ENCODE measurements at regions of chr7 and their contacts with region 1.

Region 1: GRCh38 chr7:75024922-75025321 is 48.7 kb downstream of the RCC1L start:
- DNase-seq: no peak
- H3K4me3 ChIP-seq: no peak overlapping the region
- H3K27ac ChIP-seq: no peak overlapping the region
- H3K4me1 ChIP-seq: no peaks in the 10 kb centered on the region
- H3K27me3 ChIP-seq: no peaks in the 10 kb centered on the region
- CTCF ChIP-seq: no peak
- POLR2A ChIP-seq: no peak

Region 2: DNA sequence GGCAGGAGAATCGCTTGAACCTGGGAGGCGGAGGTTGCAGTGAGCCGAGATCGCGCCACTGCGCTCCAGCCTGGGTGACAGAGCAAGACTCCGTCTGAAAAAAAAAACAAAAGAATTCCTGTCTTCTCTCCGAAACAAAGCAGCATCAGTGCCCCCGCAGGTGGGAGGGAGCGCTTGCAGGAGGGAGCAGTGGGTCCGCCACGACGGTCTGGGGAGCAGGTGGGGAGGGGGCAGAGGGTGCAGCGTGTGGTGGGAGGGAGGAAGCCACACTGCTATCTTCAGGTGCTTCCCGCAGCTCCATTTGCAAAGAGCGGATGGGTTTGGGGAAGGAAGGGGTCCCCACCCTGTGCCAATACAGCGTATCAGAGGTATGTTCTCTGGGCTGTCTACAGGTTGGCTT is 909.6 kb before region 1 on chr7:
- intact Hi-C with region 1: no loop called
- DNase-seq: no peak
- H3K4me3 ChIP-seq: no peak overlapping the region
- H3K27ac ChIP-seq: no peak overlapping the region
- H3K4me1 ChIP-seq: no peaks in the 10 kb centered on the region
- H3K27me3 ChIP-seq: no peaks in the 10 kb centered on the region
- CTCF ChIP-seq: no peak
- POLR2A ChIP-seq: no peak

Region 3: DNA sequence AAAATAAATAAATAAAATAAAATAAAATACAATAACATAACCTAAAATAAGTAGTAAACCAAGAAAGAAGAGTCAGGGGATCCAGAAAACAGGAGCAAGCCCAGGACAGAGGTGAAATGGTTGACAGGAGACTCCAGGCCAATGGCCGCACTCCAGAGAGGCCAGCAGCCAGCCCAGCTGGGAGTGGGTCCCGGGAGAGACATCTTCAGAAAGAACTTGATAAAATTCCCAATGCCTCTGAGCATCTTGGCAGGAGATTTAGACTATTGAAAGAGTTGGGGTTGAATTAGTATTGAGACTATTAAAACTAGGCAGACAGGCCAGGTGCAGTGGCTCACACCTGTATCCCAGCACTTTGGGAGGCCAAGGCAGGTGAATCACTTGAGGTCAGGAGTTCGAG is 673.1 kb before region 1 on chr7:
- intact Hi-C with region 1: loop called (anchors 5 kb)
- DNase-seq: no peak
- H3K4me3 ChIP-seq: no peak overlapping the region
- H3K27ac ChIP-seq: no peak overlapping the region
- H3K4me1 ChIP-seq: no peaks in the 10 kb centered on the region
- H3K27me3 ChIP-seq: no peaks in the 10 kb centered on the region
- CTCF ChIP-seq: no peak
- POLR2A ChIP-seq: no peak

Region 4: GRCh38 chr7:75010036-75010435 is 14.9 kb before region 1 on chr7:
- intact Hi-C with region 1: no loop called
- DNase-seq: no peak
- H3K4me3 ChIP-seq: no peak overlapping the region
- H3K27ac ChIP-seq: no peak overlapping the region
- H3K4me1 ChIP-seq: no peaks in the 10 kb centered on the region
- H3K27me3 ChIP-seq: no peaks in the 10 kb centered on the region
- CTCF ChIP-seq: no peak
- POLR2A ChIP-seq: no peak

Measured in breast epithelium (tissue), 4 donors.